ENCODE measurements at regions of chr3 and their contacts with region 1.

Region 1: GRCh38 chr3:126982471-126983175 is at the start of gene PLXNA1:
- DNase-seq: peak; percentile 84
- H3K4me3 Mint-ChIP-seq: peak within 1 kb of the TSS; percentile 76
- H3K27ac Mint-ChIP-seq: peak within 1 kb of the TSS; percentile 71
- H3K4me1 Mint-ChIP-seq: peaks cover 7% of the 10 kb centered on the region
- H3K27me3 Mint-ChIP-seq: peaks cover 11% of the 10 kb centered on the region
- total RNA-seq, gene PLXNA1: 17.2 and 18.9 TPM in 2 replicates

Region 2: DNA sequence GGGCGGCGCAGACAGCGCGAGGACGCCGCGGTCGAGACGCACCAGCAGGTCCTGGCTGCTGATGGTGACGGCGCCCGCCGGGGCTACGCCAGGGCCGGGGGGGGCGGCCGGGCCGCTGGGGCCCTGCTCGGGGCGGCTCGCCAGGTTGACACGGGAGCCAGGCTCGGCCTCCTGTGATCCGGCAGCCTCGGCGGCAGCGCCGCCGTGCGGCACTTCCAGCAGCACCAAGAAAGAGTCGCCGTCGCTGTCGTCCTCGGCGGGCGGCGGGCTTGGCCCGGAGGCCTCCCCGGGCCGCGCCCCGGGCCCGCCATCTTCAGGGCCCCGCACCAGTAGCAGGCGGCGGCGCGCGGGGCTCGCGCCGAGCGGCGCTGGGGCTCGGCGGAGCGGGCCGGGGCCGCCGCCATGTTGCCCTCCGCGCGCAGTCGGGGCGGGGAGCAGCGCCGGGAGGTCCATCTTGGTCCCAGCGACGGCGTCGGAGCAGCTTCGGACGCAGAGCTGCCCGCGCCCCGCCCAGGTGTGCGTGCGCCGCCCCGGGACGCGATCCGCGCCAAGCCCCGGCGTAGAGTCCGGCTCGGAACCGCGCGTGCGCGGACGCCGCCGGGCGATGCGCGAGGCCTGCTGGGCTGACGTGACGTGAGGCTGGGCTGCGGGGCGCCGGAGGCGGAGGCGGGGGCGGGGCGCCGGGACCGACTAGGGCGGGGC is 507.1 kb before region 1 on chr3 and contains the start of gene ZXDC:
- intact Hi-C with region 1: loop called (anchors 5 kb)
- DNase-seq: peak; percentile 90
- H3K4me3 Mint-ChIP-seq: peak within 1 kb of the TSS; percentile 94
- H3K27ac Mint-ChIP-seq: peak within 1 kb of the TSS; percentile 92
- H3K4me1 Mint-ChIP-seq: peaks cover 28% of the 10 kb centered on the region
- H3K27me3 Mint-ChIP-seq: no peaks in the 10 kb centered on the region
- total RNA-seq, gene ZXDC: 26.1 and 27.0 TPM in 2 replicates

Region 3: GRCh38 chr3:126703512-126704462 is 278.8 kb before region 1 on chr3 and contains the start of gene CHCHD6:
- intact Hi-C with region 1: loop called (anchors 5 kb)
- DNase-seq: peak; percentile 94
- H3K4me3 Mint-ChIP-seq: peak within 1 kb of the TSS; percentile 97
- H3K27ac Mint-ChIP-seq: peak within 1 kb of the TSS; percentile 80
- H3K4me1 Mint-ChIP-seq: peaks cover 15% of the 10 kb centered on the region
- H3K27me3 Mint-ChIP-seq: peaks cover 34% of the 10 kb centered on the region
- total RNA-seq, gene CHCHD6: 9.1 and 15.7 TPM in 2 replicates

Region 4: GRCh38 chr3:126752303-126752842 is 230.2 kb before region 1 on chr3:
- intact Hi-C with region 1: loop called (anchors 1 kb)
- DNase-seq: peak; percentile 33
- H3K4me3 Mint-ChIP-seq: no peak overlapping the region
- H3K27ac Mint-ChIP-seq: no peak overlapping the region
- H3K4me1 Mint-ChIP-seq: no peaks in the 10 kb centered on the region
- H3K27me3 Mint-ChIP-seq: no peaks in the 10 kb centered on the region

Region 5: GRCh38 chr3:126911162-126912026 is 71.2 kb before region 1 on chr3:
- intact Hi-C with region 1: loop called (anchors 1 kb)
- DNase-seq: peak; percentile 76
- H3K4me3 Mint-ChIP-seq: peak overlapping the region; percentile 40
- H3K27ac Mint-ChIP-seq: peak overlapping the region; percentile 76
- H3K4me1 Mint-ChIP-seq: peaks cover 49% of the 10 kb centered on the region
- H3K27me3 Mint-ChIP-seq: no peaks in the 10 kb centered on the region

Region 6: GRCh38 chr3:127544192-127544802 is 561.7 kb after region 1 on chr3:
- intact Hi-C with region 1: loop called (anchors 5 kb)
- DNase-seq: peak; percentile 38
- H3K4me3 Mint-ChIP-seq: no peak overlapping the region
- H3K27ac Mint-ChIP-seq: no peak overlapping the region
- H3K4me1 Mint-ChIP-seq: peaks cover 10% of the 10 kb centered on the region
- H3K27me3 Mint-ChIP-seq: peaks cover 15% of the 10 kb centered on the region

Region 7: GRCh38 chr3:128123538-128124368 is 1141.1 kb after region 1 on chr3 and contains the start of gene RUVBL1:
- intact Hi-C with region 1: loop called (anchors 10 kb)
- DNase-seq: peak; percentile 96
- H3K4me3 Mint-ChIP-seq: peak within 1 kb of the TSS; percentile 98
- H3K27ac Mint-ChIP-seq: peak within 1 kb of the TSS; percentile 93
- H3K4me1 Mint-ChIP-seq: peaks cover 27% of the 10 kb centered on the region
- H3K27me3 Mint-ChIP-seq: no peaks in the 10 kb centered on the region
- total RNA-seq, gene RUVBL1: 111 and 112 TPM in 2 replicates

Measured in activated T-helper 2 cell treated with anti-CD3 and anti-CD28 coated beads, Interferon-gamma antibody, Interleukin-2, Interleukin-4, amounts not matched to agents 10 μg/mL and 5 μg/mL and 100 μg/mL, durations not matched to agents 14 hours and 24 hours and 36 hours (primary cell).